ENCODE measurements at regions of chr12 and their contacts with region 1.

Region 1: DNA sequence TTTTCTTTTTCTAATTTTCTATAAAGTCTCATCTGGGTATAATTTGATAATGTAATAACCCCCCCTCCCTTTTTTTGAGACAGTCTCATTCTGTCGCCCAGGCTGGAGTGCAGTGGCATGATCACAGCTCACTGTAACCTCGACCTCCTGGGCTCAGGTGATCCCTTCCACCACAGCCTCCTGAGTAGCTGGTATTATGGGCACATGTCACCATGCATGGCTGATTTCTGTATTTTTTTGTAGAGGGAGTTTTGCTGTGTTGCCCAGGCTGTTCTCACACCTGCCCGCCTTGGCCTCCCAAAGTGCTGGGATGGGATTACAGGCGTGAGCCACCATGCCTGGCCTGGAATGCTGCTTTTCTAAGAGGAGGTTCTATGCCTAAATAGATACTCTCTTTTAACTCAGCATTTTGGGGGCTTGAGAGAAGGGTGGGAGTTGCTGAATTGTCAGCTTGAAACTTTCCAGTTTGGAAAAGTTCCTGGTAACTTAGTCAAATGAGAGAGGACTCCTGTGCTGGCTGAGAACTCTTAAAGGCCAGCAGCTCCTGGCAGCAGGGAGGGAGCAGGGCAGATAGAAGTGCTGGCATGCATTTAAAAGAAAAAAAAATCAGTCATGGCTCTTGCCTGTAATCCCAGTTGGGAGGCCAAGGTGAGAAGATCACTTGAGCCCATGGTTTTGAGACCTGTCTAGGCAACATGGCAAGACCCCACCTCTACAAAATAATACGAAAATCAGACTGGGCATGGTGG is 13.0 kb downstream of the NUDT4 start:
- DNase-seq: no peak
- H3K4me3 ChIP-seq: no peak overlapping the region
- H3K27ac ChIP-seq: no peak overlapping the region
- H3K4me1 ChIP-seq: peaks cover 0 to 72% (median 18%) of the 10 kb centered on the region in 4 donors
- H3K27me3 ChIP-seq: no peaks in the 10 kb centered on the region
- CTCF ChIP-seq: no peak

Region 2: GRCh38 chr12:93025145-93025805 is 365.4 kb before region 1 on chr12:
- intact Hi-C with region 1: loop called (anchors 10 kb)
- DNase-seq: no peak
- H3K4me3 ChIP-seq: no peak overlapping the region
- H3K27ac ChIP-seq: no peak overlapping the region
- H3K4me1 ChIP-seq: peaks cover 0 to 4% (median 0%) of the 10 kb centered on the region in 4 donors
- H3K27me3 ChIP-seq: no peaks in the 10 kb centered on the region
- CTCF ChIP-seq: peak; percentile 46 to 52